ENCODE measurements at regions of chr13 and their contacts with region 1.

Region 1: GRCh38 chr13:36420437-36420891 is 11.8 kb upstream of the CCNA1 start:
- DNase-seq: peak; percentile 85
- H3K4me3 Mint-ChIP-seq: no peak overlapping the region
- H3K27ac Mint-ChIP-seq: peak overlapping the region; percentile 33
- H3K4me1 Mint-ChIP-seq: peaks cover 21% of the 10 kb centered on the region
- H3K27me3 Mint-ChIP-seq: no peaks in the 10 kb centered on the region
- CTCF ChIP-seq: peak; percentile 77

Region 2: DNA sequence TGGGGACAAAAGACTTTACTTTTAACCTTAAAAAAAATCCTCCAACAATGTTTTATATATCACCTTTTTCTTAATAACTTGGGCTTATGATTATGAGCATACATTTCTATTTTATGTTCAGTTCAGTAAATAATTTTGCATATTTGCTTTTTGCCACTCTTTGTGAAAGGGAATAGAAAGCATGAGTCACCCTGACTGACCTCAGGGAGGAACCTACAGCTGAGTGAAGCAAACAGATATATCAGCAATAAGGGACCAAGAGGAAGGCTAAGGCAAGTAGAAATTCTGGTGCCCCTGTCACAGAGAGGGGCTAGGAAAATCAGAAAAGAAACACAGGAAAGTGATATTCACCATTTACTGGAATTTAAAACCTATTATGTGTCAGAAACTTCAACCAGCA is 168.9 kb before region 1 on chr13:
- CTCF ChIA-PET with region 1: no interaction called
- POLR2A ChIA-PET with region 1: no interaction called
- intact Hi-C with region 1: no loop called
- DNase-seq: no peak
- H3K4me3 Mint-ChIP-seq: no peak overlapping the region
- H3K27ac Mint-ChIP-seq: no peak overlapping the region
- H3K4me1 Mint-ChIP-seq: no peaks in the 10 kb centered on the region
- H3K27me3 Mint-ChIP-seq: no peaks in the 10 kb centered on the region
- CTCF ChIP-seq: no peak

Region 3: DNA sequence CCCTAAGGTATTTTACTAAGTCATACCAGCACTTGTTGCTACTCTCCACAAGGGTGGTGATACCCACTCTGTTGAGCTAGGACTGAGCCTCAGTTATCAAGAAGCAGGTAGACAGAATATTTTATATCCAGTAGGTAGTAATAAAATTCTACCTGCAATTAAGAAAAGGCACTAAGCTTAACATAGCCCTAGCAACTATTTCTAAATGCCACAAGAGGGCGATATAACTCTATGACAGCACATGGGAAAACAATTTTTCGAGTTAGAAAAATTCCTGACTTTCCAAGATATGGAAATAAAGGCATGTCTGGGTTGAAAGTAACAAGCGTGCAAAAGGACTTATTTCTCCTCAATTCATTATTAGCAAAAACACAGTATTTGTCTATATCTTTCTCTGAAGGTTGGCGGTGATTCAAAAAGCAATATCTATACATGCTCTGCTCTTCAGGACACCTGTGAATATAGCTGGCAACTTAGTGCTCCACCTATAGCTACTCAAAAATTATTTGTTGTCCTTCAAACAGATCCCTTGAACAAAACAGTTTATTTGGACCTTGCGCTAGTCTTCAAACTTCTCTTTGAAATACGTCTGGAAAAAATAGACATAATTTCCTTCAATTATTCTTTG is 137.5 kb before region 1 on chr13:
- CTCF ChIA-PET with region 1: interaction called, 4 read pairs
- POLR2A ChIA-PET with region 1: no interaction called
- intact Hi-C with region 1: loop called (anchors 2 kb)
- DNase-seq: peak; percentile 58
- H3K4me3 Mint-ChIP-seq: no peak overlapping the region
- H3K27ac Mint-ChIP-seq: no peak overlapping the region
- H3K4me1 Mint-ChIP-seq: no peaks in the 10 kb centered on the region
- H3K27me3 Mint-ChIP-seq: no peaks in the 10 kb centered on the region
- CTCF ChIP-seq: peak; percentile 67

Region 4: GRCh38 chr13:36475468-36475867 is 55.0 kb after region 1 on chr13:
- CTCF ChIA-PET with region 1: interaction called, 7 read pairs
- POLR2A ChIA-PET with region 1: no interaction called
- intact Hi-C with region 1: loop called (anchors 1 kb)
- DNase-seq: peak; percentile 62
- H3K4me3 Mint-ChIP-seq: no peak overlapping the region
- H3K27ac Mint-ChIP-seq: no peak overlapping the region
- H3K4me1 Mint-ChIP-seq: no peaks in the 10 kb centered on the region
- H3K27me3 Mint-ChIP-seq: peaks cover 15% of the 10 kb centered on the region
- CTCF ChIP-seq: peak; percentile 39

Region 5: DNA sequence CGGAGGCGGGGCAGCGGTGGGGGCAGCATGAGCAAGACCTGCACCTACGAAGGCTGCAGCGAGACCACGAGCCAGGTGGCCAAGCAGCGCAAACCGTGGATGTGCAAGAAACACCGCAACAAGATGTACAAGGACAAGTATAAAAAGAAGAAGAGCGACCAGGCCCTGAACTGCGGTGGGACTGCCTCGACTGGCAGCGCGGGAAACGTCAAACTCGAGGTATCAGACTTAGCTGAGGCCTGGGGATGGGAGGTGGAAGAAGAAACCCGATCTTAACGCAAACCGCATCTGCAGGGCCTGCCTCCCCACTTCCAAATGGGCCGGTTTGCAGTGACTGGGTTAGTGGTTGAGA is 399.3 kb after region 1 on chr13:
- CTCF ChIA-PET with region 1: interaction called, 4 read pairs
- POLR2A ChIA-PET with region 1: no interaction called
- intact Hi-C with region 1: loop called (anchors 10 kb)
- DNase-seq: peak; percentile 46
- H3K4me3 Mint-ChIP-seq: peak overlapping the region; percentile 94
- H3K27ac Mint-ChIP-seq: peak overlapping the region; percentile 79
- H3K4me1 Mint-ChIP-seq: peaks cover 27% of the 10 kb centered on the region
- H3K27me3 Mint-ChIP-seq: no peaks in the 10 kb centered on the region
- CTCF ChIP-seq: no peak

Region 6: DNA sequence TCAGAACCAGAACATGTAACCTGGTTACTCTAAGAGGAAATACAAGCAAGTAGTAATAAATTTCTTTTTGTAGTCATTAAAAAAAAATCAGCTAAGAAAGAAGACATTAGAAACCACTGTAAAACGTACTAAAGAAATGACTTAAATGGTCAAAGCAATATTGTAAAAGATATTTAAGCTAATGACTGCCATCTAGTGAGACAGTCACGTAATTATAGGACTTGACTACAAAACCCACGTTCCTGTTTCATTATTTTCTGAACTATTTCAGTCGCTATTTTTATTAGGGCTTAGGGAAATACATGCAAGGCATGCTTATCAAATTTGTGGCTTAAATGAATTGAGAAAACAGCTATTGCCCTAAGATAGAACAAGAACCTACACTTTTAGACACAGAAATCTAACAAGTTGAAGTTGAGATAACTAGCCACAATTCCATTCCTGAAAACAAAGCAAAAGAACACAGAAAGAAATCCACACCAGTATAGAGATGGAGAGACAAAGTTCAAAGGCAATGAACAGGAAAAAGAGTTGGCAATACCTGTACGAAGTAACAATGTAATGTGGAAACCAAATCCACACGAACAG is 560.8 kb after region 1 on chr13:
- CTCF ChIA-PET with region 1: interaction called, 10 read pairs
- POLR2A ChIA-PET with region 1: interaction called, 3 read pairs
- intact Hi-C with region 1: loop called (anchors 10 kb)
- DNase-seq: peak; percentile 48
- H3K4me3 Mint-ChIP-seq: no peak overlapping the region
- H3K27ac Mint-ChIP-seq: no peak overlapping the region
- H3K4me1 Mint-ChIP-seq: no peaks in the 10 kb centered on the region
- H3K27me3 Mint-ChIP-seq: no peaks in the 10 kb centered on the region
- CTCF ChIP-seq: peak; percentile 52